Dorsolateral prefrontal cortex (tissue), 120 donors: ENCODE measurements at regions of chr7 and their contacts with region 1.

Region 1: DNA sequence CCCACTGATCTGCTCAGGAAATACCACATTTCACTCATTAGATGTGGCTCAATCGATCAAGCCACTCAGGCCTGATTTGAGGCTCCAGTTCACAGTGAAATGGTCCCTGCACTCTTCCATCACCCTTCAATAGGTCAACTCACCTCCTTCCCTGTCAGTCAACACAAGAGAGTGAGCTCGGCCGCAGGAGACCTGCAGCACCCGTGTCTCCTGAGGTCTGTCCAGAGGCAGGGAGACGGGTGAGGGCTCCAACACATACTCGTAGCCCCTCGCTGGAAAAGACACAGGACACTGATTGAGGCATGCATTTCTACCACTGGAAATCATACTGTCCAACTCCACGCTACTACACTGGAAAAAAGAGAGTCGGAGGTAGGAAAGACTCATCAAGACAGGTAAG is 7.1 kb downstream of the RCC1L start:
- DNase-seq: no peak
- H3K4me3 ChIP-seq: no peak overlapping the region
- H3K27ac ChIP-seq: no peak overlapping the region
- H3K27me3 ChIP-seq: no peaks in the 10 kb centered on the region
- CTCF ChIP-seq: no peak

Region 2: DNA sequence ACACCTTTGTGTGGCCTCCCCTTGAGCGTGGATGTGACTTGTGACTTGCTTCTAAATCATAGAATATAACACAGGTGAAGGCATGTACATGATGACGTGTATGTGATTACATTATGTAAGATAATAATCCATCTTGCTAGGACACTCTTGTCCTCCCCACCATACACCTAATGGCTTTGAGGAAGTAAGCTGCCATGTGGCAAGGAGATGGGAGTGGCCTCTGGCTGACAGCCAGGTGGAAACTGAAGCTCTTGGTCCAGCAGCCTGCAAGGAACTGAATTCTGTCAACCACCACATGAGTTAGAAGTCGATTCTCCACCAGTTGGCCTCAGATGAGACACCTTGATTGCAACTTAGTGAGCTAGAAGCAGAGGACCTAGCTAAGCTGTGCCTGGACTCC is 1106.0 kb before region 1 on chr7:
- intact Hi-C with region 1: no loop called
- DNase-seq: no peak
- H3K4me3 ChIP-seq: no peak overlapping the region
- H3K27ac ChIP-seq: no peak overlapping the region
- H3K27me3 ChIP-seq: no peaks in the 10 kb centered on the region
- CTCF ChIP-seq: no peak

Region 3: DNA sequence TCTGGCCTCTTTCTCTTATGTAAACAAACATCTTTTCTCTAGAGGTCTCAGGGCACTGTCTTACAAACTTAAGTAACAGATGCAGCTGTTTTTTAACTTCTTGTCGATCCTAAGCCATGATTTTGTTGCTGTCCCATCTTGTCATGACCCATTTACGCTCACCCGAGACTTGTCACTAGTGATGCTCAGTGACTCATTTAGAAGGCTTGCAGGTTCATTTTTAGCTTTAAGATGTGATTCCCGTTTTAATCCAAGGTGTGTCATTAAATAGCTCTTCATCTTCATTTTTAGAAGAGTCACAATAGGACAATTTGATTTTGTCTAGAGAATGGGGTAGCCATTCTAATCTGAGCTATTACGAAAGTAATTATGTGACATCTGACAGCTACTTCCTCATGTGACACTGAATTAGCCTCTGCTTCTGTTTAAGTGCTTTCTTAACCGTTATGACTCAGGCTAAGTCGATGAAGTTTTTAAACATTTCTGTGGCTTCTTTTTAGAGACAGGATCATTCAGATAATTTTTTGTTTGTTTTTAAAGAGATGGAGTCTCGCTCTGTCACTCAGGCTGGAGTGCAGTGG is 468.3 kb after region 1 on chr7:
- intact Hi-C with region 1: loop called in 1 of 2 experiments (anchors 10 kb)
- DNase-seq: no peak
- H3K4me3 ChIP-seq: no peak overlapping the region
- H3K27ac ChIP-seq: peak overlapping the region in 5 of 59 donors; percentile 1 to 32 (median 7)
- H3K27me3 ChIP-seq: no peaks in the 10 kb centered on the region
- CTCF ChIP-seq: no peak

Region 4: DNA sequence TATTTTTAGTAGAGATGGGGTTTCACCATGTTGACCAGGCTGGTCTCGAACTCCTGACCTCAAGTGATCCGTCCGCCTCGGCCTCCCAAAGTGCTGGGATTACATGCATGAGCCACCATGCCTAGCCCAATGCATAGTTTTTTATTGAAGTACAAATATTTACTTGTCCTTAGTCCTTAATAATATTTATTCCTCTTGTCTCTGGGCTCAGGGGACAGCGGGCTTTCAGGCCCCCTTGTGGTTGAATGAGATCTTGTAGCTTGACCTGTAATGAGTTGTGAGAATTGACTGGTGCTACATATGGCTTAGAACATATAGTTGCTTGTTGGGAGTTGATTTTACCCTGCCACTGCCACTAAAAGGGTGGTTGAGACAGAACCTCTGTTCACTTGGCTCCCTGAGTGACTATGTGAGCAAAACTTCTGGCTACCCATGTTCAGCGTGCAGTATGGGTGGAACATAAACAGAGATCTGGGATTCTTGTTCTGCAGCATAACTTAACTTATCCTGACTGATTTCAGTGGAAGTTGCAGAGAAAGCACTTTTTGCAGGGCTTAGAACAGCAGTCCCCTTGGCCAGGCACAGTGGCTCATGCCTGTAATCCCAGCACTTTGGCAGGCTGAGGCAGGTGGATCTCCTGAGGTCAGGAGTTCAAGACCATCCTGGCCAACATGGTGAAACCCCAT is 690.6 kb after region 1 on chr7:
- intact Hi-C with region 1: loop called in 1 of 2 experiments (anchors 10 kb)
- DNase-seq: no peak
- H3K4me3 ChIP-seq: no peak overlapping the region
- H3K27ac ChIP-seq: no peak overlapping the region
- H3K27me3 ChIP-seq: no peaks in the 10 kb centered on the region
- CTCF ChIP-seq: peak in 48 of 56 donors; percentile 12 to 60 (median 37)

Region 5: DNA sequence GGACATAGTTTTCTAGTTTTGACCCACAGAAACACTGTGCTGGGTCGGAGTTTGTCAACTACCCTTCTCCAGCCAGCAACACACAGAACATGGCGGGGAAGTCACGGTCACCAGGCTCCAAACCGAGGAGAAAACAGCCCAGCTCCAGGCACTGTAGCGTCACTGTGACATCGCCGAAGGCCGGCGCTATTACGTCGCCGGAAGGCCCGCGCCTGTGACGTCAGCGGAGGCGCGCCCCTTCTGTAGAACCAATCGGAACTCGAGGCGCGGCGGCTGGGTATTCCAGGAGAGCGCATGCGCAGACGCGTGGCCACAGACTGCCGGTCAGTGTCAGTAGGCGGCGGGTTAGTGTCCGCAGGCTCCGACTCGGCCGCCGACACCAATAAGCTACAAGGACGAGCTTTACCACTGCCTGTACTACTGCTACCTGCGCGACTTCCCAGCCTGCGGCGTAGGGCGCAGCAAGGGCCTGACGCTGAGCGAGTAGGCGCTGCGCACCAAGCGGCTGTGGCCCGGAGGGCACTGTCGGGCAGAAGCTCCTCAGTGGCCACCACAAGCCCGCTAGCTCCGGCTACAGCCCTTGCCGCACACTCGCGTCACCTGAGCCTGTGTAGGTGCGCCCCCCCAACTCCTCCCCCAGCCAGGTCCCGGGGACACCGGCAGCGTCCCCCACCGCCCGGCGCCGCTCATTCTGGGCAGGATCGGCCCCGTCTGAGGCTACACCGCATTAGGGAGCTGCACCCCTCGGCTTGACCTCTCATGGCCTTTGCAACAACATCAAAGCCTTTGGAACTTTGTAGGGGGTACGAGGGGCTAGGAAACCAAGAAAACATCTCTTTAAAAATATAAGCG is 1100.1 kb after region 1 on chr7:
- intact Hi-C with region 1: no loop called
- DNase-seq: peak; percentile 96 to 98 (median 97)
- H3K4me3 ChIP-seq: peak overlapping the region; percentile 53 to 97 (median 83)
- H3K27ac ChIP-seq: peak overlapping the region; percentile 32 to 97 (median 89)
- H3K27me3 ChIP-seq: no peaks in the 10 kb centered on the region
- CTCF ChIP-seq: peak in 53 of 56 donors; percentile 22 to 70 (median 49)